Activated naive CD4-positive, alpha-beta T cell treated with anti-CD3 and anti-CD28 coated beads for 36 hours (primary cell): ENCODE measurements at regions of chr9 and their contacts with region 1.

Region 1: GRCh38 chr9:1726993-1727759 is 288.0 kb upstream of the SMARCA2 start:
- DNase-seq: peak; percentile 16
- H3K4me3 Mint-ChIP-seq: no peak overlapping the region
- H3K27ac Mint-ChIP-seq: no peak overlapping the region
- H3K4me1 Mint-ChIP-seq: no peaks in the 10 kb centered on the region
- H3K27me3 Mint-ChIP-seq: peaks cover 5% of the 10 kb centered on the region

Region 2: GRCh38 chr9:1575939-1576338 is 151.2 kb before region 1 on chr9:
- CTCF ChIA-PET with region 1: no interaction called
- intact Hi-C with region 1: no loop called
- DNase-seq: no peak
- H3K4me3 Mint-ChIP-seq: no peak overlapping the region
- H3K27ac Mint-ChIP-seq: no peak overlapping the region
- H3K4me1 Mint-ChIP-seq: no peaks in the 10 kb centered on the region
- H3K27me3 Mint-ChIP-seq: peaks cover 7% of the 10 kb centered on the region

Region 3: DNA sequence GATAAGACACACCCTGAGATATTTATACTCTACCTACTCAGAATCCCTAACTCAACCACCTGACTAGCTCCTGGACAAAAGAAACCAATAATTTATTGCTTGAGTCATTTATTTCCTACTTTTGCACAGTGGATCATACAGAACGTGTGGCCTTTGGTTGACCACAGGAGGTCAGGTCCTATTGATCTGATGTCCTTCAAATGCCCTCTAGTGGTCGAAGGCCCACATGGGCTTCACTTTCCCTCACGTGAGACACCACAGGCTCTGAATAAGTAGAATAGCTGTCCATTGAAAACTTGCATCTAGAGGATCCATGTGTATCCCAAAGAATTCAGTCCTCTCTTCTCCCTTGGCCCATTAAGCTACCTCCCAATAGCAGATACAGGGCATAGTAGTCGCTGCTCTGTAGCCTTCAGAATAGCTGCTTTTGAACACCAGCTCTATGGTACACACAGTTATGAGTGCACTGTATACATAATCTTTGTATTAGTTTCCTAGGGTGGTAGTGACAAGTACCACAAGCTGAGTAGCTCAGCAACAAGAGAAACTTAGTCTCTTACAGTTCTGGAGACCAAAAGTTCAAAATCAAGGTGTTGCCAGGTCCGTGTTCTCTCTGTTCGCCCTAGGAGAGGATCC is 110.4 kb after region 1 on chr9:
- CTCF ChIA-PET with region 1: interaction called, 4 read pairs
- intact Hi-C with region 1: loop called (anchors 10 kb)
- DNase-seq: peak; percentile 37
- H3K4me3 Mint-ChIP-seq: no peak overlapping the region
- H3K27ac Mint-ChIP-seq: no peak overlapping the region
- H3K4me1 Mint-ChIP-seq: no peaks in the 10 kb centered on the region
- H3K27me3 Mint-ChIP-seq: peaks cover 6% of the 10 kb centered on the region